ENCODE measurements at regions of chr7 and their contacts with region 1.

Region 1: GRCh38 chr7:4775250-4775847 is at the start of gene AP5Z1:
- DNase-seq: peak; percentile 83 to 97
- H3K4me3 ChIP-seq: peak within 1 kb of the TSS; percentile 98 to 100
- H3K27ac ChIP-seq: peak within 1 kb of the TSS; percentile 90 to 95
- H3K4me1 ChIP-seq: peaks cover 8 to 12% of the 10 kb centered on the region in 2 donors
- H3K27me3 ChIP-seq: no peaks in the 10 kb centered on the region
- CTCF ChIP-seq: no peak
- total RNA-seq, gene AP5Z1: 115 TPM

Region 2: GRCh38 chr7:4641667-4642467 is 133.5 kb before region 1 on chr7:
- intact Hi-C with region 1: loop called (anchors 1 kb)
- DNase-seq: peak; percentile 63 to 97
- H3K4me3 ChIP-seq: peak overlapping the region; percentile 67 to 76
- H3K27ac ChIP-seq: peak overlapping the region; percentile 87 to 94
- H3K4me1 ChIP-seq: peaks cover 0 to 4% of the 10 kb centered on the region in 2 donors
- H3K27me3 ChIP-seq: no peaks in the 10 kb centered on the region
- CTCF ChIP-seq: peak; percentile 15 to 90 (median 41)

Region 3: DNA sequence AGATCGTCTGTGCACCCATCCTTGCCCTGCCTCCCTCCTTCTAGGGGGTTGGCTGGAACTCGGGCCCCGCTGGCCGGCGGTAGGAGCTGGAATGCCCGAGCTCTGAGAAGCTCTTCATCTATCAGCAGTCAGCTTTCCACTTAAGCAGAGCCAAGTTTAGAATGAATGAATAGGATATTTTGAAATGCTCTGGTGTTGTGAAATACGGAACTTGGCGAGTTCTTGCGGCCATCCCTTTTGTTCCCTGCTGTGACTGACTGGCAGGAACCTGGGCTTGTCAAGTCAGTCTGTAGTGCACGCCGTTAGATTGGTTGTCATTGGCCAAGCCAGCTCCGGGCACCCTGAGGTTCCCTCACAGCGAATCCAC is 60.0 kb before region 1 on chr7:
- intact Hi-C with region 1: loop called (anchors 5 kb)
- DNase-seq: peak in 1 of 2 donors; percentile 87
- H3K4me3 ChIP-seq: peak overlapping the region in 1 of 2 donors; percentile 15
- H3K27ac ChIP-seq: peak overlapping the region; percentile 39 to 48
- H3K4me1 ChIP-seq: peaks cover 5 to 20% of the 10 kb centered on the region in 2 donors
- H3K27me3 ChIP-seq: no peaks in the 10 kb centered on the region
- CTCF ChIP-seq: no peak

Region 4: GRCh38 chr7:4973728-4974198 is 198.4 kb after region 1 on chr7:
- intact Hi-C with region 1: loop called (anchors 10 kb)
- DNase-seq: peak; percentile 39 to 92
- H3K4me3 ChIP-seq: peak overlapping the region; percentile 67 to 96
- H3K27ac ChIP-seq: peak overlapping the region; percentile 83 to 96
- H3K4me1 ChIP-seq: no peaks in the 10 kb centered on the region
- H3K27me3 ChIP-seq: no peaks in the 10 kb centered on the region
- CTCF ChIP-seq: peak; percentile 66 to 86 (median 78)

Measured in ascending aorta (tissue), 2 donors.